H1 (cell line): ENCODE measurements at regions of chr17 and their contacts with region 1.

Region 1: DNA sequence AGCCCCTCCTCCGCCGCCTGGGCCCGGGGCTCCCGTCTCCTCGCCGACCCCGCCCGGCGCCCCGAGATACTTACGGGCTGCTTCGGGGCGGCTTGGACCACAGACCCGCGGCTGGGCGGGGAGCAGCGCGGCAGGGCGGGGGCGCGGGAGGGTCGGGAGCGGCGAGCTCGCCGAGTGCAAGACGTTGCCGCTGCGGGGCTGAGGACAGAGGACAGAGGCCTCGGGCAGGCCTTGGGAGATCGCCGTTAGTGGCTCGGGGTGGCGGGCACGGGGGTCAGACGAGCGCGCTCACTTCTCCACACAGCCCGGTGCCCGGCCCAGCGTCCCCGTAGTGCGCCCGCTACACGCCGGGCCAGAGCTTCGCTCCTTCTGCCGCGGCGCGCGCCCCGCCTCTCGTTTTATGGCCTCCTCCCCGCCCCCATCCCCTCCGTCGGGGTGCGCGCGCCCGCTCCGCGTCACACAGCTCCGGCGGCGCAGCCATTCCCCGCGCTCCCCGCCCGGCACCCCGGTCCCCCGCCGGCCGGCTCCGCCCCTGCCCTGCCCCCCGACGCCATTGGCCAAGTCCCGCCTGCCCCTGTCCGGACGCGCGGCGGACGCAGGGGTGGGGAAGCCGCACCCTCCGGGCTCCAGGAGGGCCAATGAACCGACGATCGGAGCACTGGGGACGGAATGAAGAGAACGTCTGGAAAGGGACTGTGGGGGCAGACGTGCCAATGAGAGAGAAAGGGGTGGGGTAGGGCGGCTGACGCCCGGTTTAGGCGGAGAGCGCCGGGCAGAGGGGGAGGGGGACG is at the start of gene TOB1:
- DNase-seq: peak; percentile 90 to 97
- H3K4me3 ChIP-seq: peak within 1 kb of the TSS; percentile 81 to 99 (median 91)
- H3K27ac ChIP-seq: peak within 1 kb of the TSS; percentile 95
- H3K4me1 ChIP-seq: peaks cover 0 to 2% (median 0%) of the 10 kb centered on the region in 4 experiments; a peak in 3 of 7 replicates
- H3K27me3 ChIP-seq: no peaks in the 10 kb centered on the region
- CTCF ChIP-seq: no peak
- EP300 ChIP-seq: no peak
- POLR2A ChIP-seq: peak; percentile 98 to 100
- RAD21 ChIP-seq: 0 out of 4 replicates have a peak, but pooled peaks of 1 of the 2 experiments have one; percentile 9
- total RNA-seq, gene TOB1: 20.8 and 26.7 TPM in 2 replicates

Region 2: DNA sequence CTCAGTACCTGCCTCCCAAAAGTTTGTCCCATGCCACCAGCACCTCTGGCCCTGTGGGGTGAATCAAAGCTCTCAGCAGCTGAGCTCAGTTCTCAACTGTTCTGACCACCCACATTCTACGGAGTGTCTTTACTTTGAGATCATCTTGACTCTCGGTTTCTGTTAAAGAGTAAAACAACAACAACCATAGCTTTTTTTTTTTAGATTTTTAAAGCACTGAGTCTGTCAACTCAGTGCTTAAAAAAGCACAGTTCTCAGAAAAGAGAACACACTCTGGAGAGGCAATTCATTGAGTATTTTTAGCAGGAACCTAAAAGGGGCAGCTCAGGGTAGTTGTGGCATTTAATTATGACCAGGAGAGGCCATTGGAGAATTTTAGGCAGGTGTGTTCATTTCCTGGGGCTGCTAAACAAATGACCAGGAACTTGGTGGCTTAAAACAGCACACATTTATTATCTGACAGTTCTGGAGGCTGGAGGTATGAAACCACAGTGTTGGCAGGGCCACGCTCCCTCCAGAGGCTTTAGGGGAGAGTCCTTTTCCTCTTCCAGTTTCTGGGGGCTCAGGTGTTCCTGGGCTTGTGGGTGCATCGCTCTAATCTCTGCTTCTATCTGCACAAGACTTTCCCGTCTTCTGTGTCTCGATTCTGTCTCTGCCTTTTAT is 37.5 kb before region 1 on chr17:
- CTCF ChIA-PET with region 1: interaction called, 3 read pairs
- POLR2A ChIA-PET with region 1: interaction called, 21 read pairs
- DNase-seq: no peak
- H3K4me3 ChIP-seq: no peak overlapping the region
- H3K27ac ChIP-seq: no peak overlapping the region
- H3K4me1 ChIP-seq: peaks cover 7 to 17% (median 11%) of the 10 kb centered on the region in 4 experiments
- H3K27me3 ChIP-seq: no peaks in the 10 kb centered on the region
- CTCF ChIP-seq: no peak
- EP300 ChIP-seq: no peak
- POLR2A ChIP-seq: no peak
- RAD21 ChIP-seq: no peak

Region 3: GRCh38 chr17:50877838-50878237 is 11.7 kb after region 1 on chr17:
- CTCF ChIA-PET with region 1: interaction called, 6 read pairs
- POLR2A ChIA-PET with region 1: interaction called, 51 read pairs
- DNase-seq: no peak
- H3K4me3 ChIP-seq: no peak overlapping the region
- H3K27ac ChIP-seq: no peak overlapping the region
- H3K4me1 ChIP-seq: no peaks in the 10 kb centered on the region
- H3K27me3 ChIP-seq: no peaks in the 10 kb centered on the region
- CTCF ChIP-seq: no peak
- EP300 ChIP-seq: no peak
- POLR2A ChIP-seq: no peak
- RAD21 ChIP-seq: no peak

Region 4: DNA sequence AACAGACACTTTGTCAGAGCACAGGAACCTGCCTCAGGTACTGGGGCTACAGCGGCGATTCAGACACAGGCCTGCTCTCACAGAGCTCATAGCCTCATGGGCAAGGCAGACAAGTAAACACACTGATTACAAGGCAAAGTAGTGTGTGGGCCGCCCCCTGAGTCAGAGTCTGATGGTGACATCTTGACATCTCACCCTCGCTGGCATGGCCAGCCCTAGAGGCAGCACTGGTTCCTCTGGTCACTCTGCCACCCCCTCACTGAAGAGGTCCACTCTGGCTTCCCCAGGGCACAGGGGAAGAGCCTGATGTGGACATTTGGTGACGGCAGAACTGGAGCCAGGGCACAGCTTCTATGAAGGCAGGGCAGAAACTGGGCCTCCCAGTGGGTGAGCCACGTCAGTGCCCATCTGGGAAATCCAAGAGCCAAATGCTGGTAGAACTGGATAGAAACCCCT is 32.9 kb after region 1 on chr17:
- CTCF ChIA-PET with region 1: interaction called, 16 read pairs
- POLR2A ChIA-PET with region 1: interaction called, 85 read pairs
- DNase-seq: no peak
- H3K4me3 ChIP-seq: no peak overlapping the region
- H3K27ac ChIP-seq: no peak overlapping the region
- H3K4me1 ChIP-seq: peaks cover 0 to 15% (median 7%) of the 10 kb centered on the region in 4 experiments; a peak in 6 of 7 replicates
- H3K27me3 ChIP-seq: no peaks in the 10 kb centered on the region
- CTCF ChIP-seq: no peak
- EP300 ChIP-seq: no peak
- POLR2A ChIP-seq: no peak
- RAD21 ChIP-seq: no peak

Region 5: DNA sequence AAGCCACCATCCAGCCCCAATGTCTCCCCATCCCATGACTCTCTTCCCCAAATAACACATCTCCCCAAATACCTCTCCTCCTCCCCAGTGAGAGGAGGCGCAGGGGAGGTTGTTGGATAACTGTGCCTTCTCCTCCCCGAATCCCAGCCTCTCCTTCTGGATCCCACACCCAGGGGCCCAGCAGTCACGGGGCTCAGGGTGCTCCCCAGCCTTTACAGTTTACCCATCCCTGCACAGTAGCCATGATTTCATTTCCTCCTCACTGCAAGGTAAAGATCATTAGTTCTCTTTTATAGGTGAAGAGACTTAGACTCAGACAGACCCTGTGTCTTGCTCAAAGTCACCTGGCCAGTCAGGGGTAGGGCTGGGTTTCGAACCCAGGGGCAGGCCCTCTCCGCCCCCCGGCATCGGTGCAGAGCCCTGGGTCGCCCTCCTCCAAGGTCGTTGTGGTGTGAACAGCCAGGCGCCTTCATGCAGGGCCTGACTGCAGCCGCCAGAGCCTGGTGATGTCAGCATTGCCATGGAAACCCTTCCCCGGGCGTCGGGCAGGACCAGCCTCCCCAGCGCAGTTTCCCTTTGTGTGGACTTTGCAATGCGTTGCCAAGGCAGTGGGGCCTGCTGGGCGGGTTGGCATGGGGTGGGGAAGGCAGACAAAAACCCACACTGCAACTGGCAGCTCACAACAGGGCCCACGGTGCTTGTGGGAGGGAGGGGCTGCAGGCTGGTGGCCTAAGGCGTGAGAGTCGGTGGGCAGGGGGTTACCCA is 53.3 kb after region 1 on chr17:
- CTCF ChIA-PET with region 1: interaction called, 3 read pairs
- POLR2A ChIA-PET with region 1: interaction called, 71 read pairs
- DNase-seq: peak in 1 of 2 experiments; percentile 82
- H3K4me3 ChIP-seq: no peak overlapping the region
- H3K27ac ChIP-seq: no peak overlapping the region; the same call in 1 of the 2 replicates
- H3K4me1 ChIP-seq: peaks cover 2 to 48% (median 34%) of the 10 kb centered on the region in 4 experiments
- H3K27me3 ChIP-seq: peaks cover 0 to 2% (median 0%) of the 10 kb centered on the region in 4 experiments; a peak in 2 of 7 replicates
- CTCF ChIP-seq: no peak
- EP300 ChIP-seq: no peak
- POLR2A ChIP-seq: no peak
- RAD21 ChIP-seq: no peak

Region 6: GRCh38 chr17:50986989-50987660 is 120.9 kb after region 1 on chr17:
- CTCF ChIA-PET with region 1: no interaction called
- POLR2A ChIA-PET with region 1: no interaction called
- DNase-seq: no peak
- H3K4me3 ChIP-seq: no peak overlapping the region
- H3K27ac ChIP-seq: no peak overlapping the region
- H3K4me1 ChIP-seq: no peaks in the 10 kb centered on the region
- H3K27me3 ChIP-seq: no peaks in the 10 kb centered on the region
- CTCF ChIP-seq: no peak
- EP300 ChIP-seq: no peak
- POLR2A ChIP-seq: no peak
- RAD21 ChIP-seq: no peak